ENCODE measurements at regions of chr20 and their contacts with region 1.

Region 1: GRCh38 chr20:20824924-20825584 is 112.6 kb upstream of the RALGAPA2 start:
- DNase-seq: peak; percentile 33 to 48
- ATAC-seq: peak; percentile 76

Region 2: GRCh38 chr20:20664795-20665589 is 160.1 kb before region 1 on chr20:
- intact Hi-C with region 1: loop called in 1 of 2 experiments (anchors 10 kb)
- DNase-seq: no peak
- ATAC-seq: peak; percentile 86

Region 3: GRCh38 chr20:20743511-20744169 is 81.4 kb before region 1 on chr20:
- intact Hi-C with region 1: no loop called
- DNase-seq: peak; percentile 35 to 51
- ATAC-seq: peak; percentile 89